Vagina (tissue), 2 donors: ENCODE measurements at regions of chr1 and their contacts with region 1.

Region 1: DNA sequence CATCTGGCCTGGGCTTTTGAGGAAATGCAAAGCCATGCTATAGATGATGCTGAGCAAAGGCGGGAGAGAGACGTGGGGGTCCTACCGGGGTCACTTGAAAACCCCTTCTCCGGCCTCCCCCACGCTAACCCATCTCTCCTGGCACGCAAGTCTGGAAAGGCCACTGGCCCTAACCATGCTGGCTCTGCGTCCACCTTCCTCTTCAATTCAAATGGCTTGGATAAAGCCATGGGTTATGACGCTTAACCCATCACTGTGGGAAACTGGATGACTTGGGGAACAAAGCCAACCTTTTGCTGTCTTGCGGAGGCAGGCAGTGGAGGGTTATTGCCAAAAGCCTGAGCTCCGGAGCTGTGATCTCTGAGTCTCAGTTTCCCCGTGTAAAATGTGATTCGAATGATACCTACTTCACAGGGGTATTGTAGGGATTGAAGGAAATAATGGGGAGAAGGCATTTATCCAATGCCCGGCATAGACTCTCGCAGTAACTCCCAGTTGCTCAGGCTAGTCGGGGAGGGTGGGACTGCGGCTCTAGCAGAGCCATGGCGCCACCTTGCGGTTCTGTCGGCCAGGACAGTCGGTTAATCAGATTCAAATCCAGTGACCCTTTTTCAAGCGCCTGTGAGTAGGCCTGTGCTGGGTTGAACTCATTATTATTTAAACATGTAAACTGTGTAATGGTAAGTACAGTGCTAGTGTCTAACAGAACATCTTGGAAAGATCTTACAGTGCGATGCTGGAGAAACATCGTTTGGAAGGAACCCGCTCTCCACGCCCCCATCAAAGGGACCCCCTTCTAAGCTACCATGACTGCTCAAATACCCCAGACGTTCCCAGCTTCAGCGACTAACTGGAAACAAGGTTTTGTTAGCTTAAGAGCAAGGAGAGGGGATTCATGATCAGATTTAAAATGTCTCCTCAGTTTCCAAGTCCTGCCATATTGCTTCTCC is 20.3 kb downstream of the NEK2 start:
- DNase-seq: no peak
- H3K4me3 ChIP-seq: no peak overlapping the region
- H3K27ac ChIP-seq: no peak overlapping the region
- H3K4me1 ChIP-seq: peaks cover 7% of the 10 kb centered on the region
- H3K27me3 ChIP-seq: no peaks in the 10 kb centered on the region
- CTCF ChIP-seq: peak; percentile 79 to 91 (median 85)
- POLR2A ChIP-seq: no peak

Region 2: DNA sequence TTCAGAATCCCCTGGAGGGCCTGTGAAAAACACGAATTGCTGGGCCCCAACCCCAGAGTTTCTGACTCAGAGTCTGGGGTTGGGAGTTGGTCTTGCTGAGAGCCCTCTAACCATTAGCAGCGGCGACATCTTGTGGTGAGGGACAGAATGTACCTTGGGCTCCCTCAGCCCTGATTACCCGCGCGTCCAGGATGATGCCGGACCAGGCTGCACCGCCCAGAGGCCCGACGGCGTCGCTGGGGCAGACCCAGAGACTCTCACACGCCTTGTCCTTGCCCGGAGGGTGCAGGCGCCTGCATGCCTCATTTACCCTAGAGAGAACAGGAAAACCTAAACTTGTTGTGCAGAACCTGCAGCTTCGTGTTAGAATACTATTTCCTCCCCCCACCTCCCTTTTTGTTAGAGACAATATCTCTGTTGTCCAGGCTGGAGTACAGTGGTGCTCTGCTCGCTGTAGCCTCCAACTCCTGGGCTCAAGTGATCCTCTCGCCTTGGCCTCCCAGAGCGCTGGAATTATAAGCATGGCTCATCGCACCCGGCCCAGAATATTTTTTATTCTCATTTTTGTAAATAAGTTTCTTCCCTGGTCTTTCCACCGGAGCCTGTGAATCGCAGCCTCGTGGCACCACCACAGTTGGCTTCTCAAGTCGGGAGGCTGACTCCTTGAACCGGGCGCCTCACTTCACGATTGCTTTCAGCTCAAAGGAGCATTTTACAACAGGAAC is 140.9 kb before region 1 on chr1:
- intact Hi-C with region 1: loop called (anchors 10 kb)
- DNase-seq: no peak
- H3K4me3 ChIP-seq: no peak overlapping the region
- H3K27ac ChIP-seq: peak overlapping the region; percentile 21
- H3K4me1 ChIP-seq: peaks cover 21% of the 10 kb centered on the region
- H3K27me3 ChIP-seq: no peaks in the 10 kb centered on the region
- CTCF ChIP-seq: peak; percentile 48 to 66 (median 60)
- POLR2A ChIP-seq: no peak

Region 3: DNA sequence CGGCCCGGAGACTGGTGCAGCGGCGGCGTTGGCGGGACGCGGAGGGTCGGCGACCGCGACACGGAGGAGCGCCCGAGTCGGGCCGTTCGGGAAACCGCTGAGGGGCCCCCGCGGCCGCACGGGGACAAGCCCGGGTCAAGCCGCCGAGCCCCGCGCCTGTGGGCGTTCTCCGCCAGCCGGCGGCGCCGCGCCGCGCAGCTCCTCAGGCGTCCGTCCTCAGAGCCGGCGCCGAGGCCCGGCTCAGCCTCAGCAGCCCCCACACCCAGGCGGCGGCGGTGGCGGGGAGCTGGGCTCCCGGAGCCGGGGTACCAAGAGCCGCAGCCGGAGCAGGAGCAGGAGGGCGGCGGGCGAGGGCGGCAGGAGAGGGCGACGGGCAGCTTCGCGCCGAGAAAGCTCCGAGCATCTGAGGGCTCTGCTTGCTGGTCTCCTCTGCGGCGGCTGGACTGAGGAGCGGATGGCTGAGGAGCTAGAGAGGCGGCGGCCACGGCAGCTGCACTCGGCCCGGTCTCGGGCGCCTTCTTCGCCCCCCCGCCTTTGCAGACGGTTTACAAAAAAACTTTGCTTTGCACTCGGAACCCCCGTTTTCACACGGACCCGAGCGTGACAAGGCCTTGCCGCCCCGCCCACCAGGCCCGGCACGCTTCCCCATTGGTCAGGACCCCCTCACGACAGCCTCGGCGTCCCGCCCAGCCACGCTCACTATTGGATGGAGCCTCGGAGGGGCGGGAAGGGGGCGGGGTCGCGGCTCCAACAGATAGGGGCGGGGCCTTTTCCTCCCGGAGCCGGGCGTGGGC is 76.3 kb before region 1 on chr1 and contains the start of gene SLC30A1:
- intact Hi-C with region 1: loop called (anchors 5 kb)
- DNase-seq: peak in 1 of 2 donors; percentile 99
- H3K4me3 ChIP-seq: peak within 1 kb of the TSS; percentile 59 to 78
- H3K27ac ChIP-seq: peak within 1 kb of the TSS; percentile 94
- H3K4me1 ChIP-seq: peaks cover 53% of the 10 kb centered on the region
- H3K27me3 ChIP-seq: no peaks in the 10 kb centered on the region
- CTCF ChIP-seq: peak in 1 of 3 experiments; percentile 19
- POLR2A ChIP-seq: peak; percentile 45 to 88
- total RNA-seq, gene SLC30A1: 19.2 TPM

Region 4: GRCh38 chr1:211813590-211813989 is 158.5 kb after region 1 on chr1:
- intact Hi-C with region 1: no loop called
- DNase-seq: no peak
- H3K4me3 ChIP-seq: no peak overlapping the region
- H3K27ac ChIP-seq: no peak overlapping the region
- H3K4me1 ChIP-seq: peaks cover 5% of the 10 kb centered on the region
- H3K27me3 ChIP-seq: no peaks in the 10 kb centered on the region
- CTCF ChIP-seq: no peak
- POLR2A ChIP-seq: no peak